A673 (cell line): ENCODE measurements at regions of chr16 and their contacts with region 1.

Region 1: GRCh38 chr16:22144520-22144919 is 17.8 kb upstream of the SDR42E2 start:
- DNase-seq: no peak
- H3K4me3 ChIP-seq: no peak overlapping the region
- H3K27ac ChIP-seq: no peak overlapping the region
- H3K4me1 ChIP-seq: no peaks in the 10 kb centered on the region
- H3K27me3 ChIP-seq: no peaks in the 10 kb centered on the region
- CTCF ChIP-seq: no peak

Region 2: GRCh38 chr16:22035153-22035552 is 109.4 kb before region 1 on chr16:
- CTCF ChIA-PET with region 1: no interaction called
- POLR2A ChIA-PET with region 1: interaction called, 18 read pairs
- intact Hi-C with region 1: no loop called
- DNase-seq: no peak
- H3K4me3 ChIP-seq: no peak overlapping the region
- H3K27ac ChIP-seq: no peak overlapping the region
- H3K4me1 ChIP-seq: no peaks in the 10 kb centered on the region
- H3K27me3 ChIP-seq: no peaks in the 10 kb centered on the region
- CTCF ChIP-seq: no peak